HepG2 (cell line): ENCODE measurements at regions of chr3 and their contacts with region 1.

Region 1: GRCh38 chr3:38227989-38228388 is 37.6 kb upstream of the SLC22A13 start:
- DNase-seq: no peak
- ATAC-seq: no peak
- H3K4me3 ChIP-seq: no peak overlapping the region
- H3K27ac ChIP-seq: no peak overlapping the region
- H3K4me1 ChIP-seq: no peaks in the 10 kb centered on the region
- H3K27me3 ChIP-seq: no peaks in the 10 kb centered on the region
- CTCF ChIP-seq: no peak
- EP300 ChIP-seq: no peak
- POLR2A ChIP-seq: no peak
- RAD21 ChIP-seq: no peak

Region 2: GRCh38 chr3:38018296-38019266 is 209.4 kb before region 1 on chr3:
- CTCF ChIA-PET with region 1: no interaction called
- POLR2A ChIA-PET with region 1: no interaction called
- in situ Hi-C with region 1: no loop called
- intact Hi-C with region 1: no loop called
- DNase-seq: no peak
- ATAC-seq: no peak
- H3K4me3 ChIP-seq: no peak overlapping the region
- H3K27ac ChIP-seq: no peak overlapping the region
- H3K4me1 ChIP-seq: peaks cover 69% of the 10 kb centered on the region
- H3K27me3 ChIP-seq: no peaks in the 10 kb centered on the region
- CTCF ChIP-seq: no peak
- EP300 ChIP-seq: no peak
- POLR2A ChIP-seq: no peak
- RAD21 ChIP-seq: no peak

Region 3: GRCh38 chr3:38270616-38271015 is 42.6 kb after region 1 on chr3:
- CTCF ChIA-PET with region 1: no interaction called
- POLR2A ChIA-PET with region 1: no interaction called
- in situ Hi-C with region 1: no loop called
- intact Hi-C with region 1: loop called (anchors 1 kb)
- DNase-seq: no peak
- ATAC-seq: no peak
- H3K4me3 ChIP-seq: no peak overlapping the region
- H3K27ac ChIP-seq: no peak overlapping the region
- H3K4me1 ChIP-seq: no peaks in the 10 kb centered on the region
- H3K27me3 ChIP-seq: peaks cover 0 to 4% of the 10 kb centered on the region in 2 experiments; a peak in 1 of 5 replicates
- CTCF ChIP-seq: no peak
- EP300 ChIP-seq: no peak
- POLR2A ChIP-seq: no peak
- RAD21 ChIP-seq: no peak

Region 4: GRCh38 chr3:38346587-38347410 is 118.8 kb after region 1 on chr3 and contains the start of gene XYLB:
- CTCF ChIA-PET with region 1: no interaction called
- POLR2A ChIA-PET with region 1: no interaction called
- in situ Hi-C with region 1: no loop called
- intact Hi-C with region 1: no loop called
- DNase-seq: peak; percentile 73
- ATAC-seq: peak; percentile 90
- H3K4me3 ChIP-seq: peak within 1 kb of the TSS; percentile 89 to 100 (median 94)
- H3K27ac ChIP-seq: peak within 1 kb of the TSS; percentile 93
- H3K4me1 ChIP-seq: peaks cover 48% of the 10 kb centered on the region
- H3K27me3 ChIP-seq: no peaks in the 10 kb centered on the region
- CTCF ChIP-seq: peak; percentile 96
- EP300 ChIP-seq: peak in 1 of 2 experiments; percentile 57; a peak in 1 of 4 replicates
- POLR2A ChIP-seq: peak; percentile 91 to 94
- RAD21 ChIP-seq: peak; percentile 84
- total RNA-seq, gene XYLB: 25.9 and 28.9 TPM in 2 replicates